Posterior cingulate gyrus (tissue), 11 donors: ENCODE measurements at regions of chr1 and their contacts with region 1.

Region 1: GRCh38 chr1:184036517-184036949 is 995 bp downstream of the COLGALT2 start:
- DNase-seq: peak in 9 of 10 donors; percentile 54 to 95 (median 65)

Region 2: DNA sequence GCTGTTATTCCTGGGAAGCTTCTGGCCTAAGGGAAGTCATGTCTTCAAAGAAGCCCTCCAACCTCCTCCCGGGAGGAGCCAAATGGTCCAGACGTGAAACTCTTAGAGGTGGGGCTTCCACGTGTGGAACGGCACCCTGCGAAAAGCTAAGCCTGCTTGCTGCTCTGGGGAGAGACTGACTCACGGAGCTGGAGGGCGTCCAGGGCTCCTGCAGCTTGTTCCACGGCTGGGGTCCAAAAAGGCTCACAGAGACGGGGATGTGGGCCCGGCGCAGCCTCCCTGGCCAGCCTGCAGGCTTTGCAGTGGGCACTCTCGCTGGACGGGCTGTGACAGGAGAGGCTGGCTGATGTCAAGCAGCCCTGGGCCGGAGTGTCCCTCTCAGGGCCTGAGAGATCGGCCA is 104.1 kb before region 1 on chr1:
- intact Hi-C with region 1: loop called (anchors 5 kb)
- DNase-seq: peak; percentile 78 to 97 (median 86)

Region 3: GRCh38 chr1:183989078-183989577 is 47.4 kb before region 1 on chr1:
- intact Hi-C with region 1: loop called (anchors 10 kb)
- DNase-seq: peak in 9 of 10 donors; percentile 33 to 94 (median 62)

Region 4: DNA sequence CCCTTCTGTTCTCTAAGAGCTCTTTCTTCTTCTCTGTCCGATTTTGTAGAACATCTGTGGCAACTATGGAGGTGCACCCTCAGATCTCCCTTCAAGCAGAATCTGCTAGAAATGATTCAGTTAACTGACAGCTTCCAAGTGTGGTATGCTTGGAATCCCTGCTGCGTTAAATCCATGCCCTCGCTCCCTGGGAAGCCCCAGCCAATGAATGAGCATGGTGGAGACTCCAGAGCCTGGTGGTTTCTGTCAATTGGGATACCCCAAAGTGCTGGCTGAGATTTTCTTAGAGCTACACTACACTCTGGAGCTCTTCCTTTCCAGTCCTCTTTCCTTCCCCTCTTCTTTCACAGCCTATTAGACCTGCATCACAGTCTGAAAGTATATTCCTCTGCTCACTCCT is 234.0 kb after region 1 on chr1:
- intact Hi-C with region 1: no loop called
- DNase-seq: no peak